ENCODE measurements at regions of chr15 and their contacts with region 1.

Region 1: DNA sequence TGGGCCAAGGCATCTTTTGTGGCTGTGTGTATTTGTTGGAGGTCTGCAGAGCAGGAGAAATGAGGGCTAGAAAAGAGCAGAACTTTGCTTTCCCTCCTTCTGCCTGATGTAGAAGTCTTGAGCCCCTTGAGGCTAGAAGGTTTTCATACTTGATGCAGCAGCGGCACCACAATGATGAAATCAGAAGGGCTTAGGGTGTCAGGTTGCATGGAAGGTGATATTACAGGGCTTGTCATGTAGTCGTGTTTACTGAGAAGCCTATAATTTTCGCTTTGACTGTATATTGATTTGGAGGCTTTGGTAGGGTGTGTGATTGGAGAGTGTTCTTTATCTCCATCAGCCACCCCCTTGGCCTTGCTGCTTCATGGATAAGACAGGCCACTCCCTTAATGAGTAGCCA is 339.8 kb downstream of the THSD4 start:
- DNase-seq: no peak

Region 2: GRCh38 chr15:71496336-71496955 is 41.3 kb after region 1 on chr15:
- intact Hi-C with region 1: loop called (anchors 5 kb)
- DNase-seq: no peak